ENCODE measurements at regions of chr20 and their contacts with region 1.

Region 1: GRCh38 chr20:23050847-23051631 is 1.6 kb upstream of the THBD start:
- DNase-seq: peak; percentile 94
- H3K4me3 ChIP-seq: peak overlapping the region; percentile 15 to 62 (median 50)
- H3K27ac ChIP-seq: peak overlapping the region; percentile 62
- H3K4me1 ChIP-seq: peaks cover 16% of the 10 kb centered on the region
- H3K27me3 ChIP-seq: no peaks in the 10 kb centered on the region
- CTCF ChIP-seq: peak; percentile 82 to 85
- POLR2A ChIP-seq: peak; percentile 44

Region 2: GRCh38 chr20:22333885-22334545 is 717.0 kb before region 1 on chr20:
- CTCF ChIA-PET with region 1: interaction called, 5 read pairs
- POLR2A ChIA-PET with region 1: no interaction called
- dilution Hi-C with region 1: no loop called
- intact Hi-C with region 1: loop called (anchors 2 kb)
- DNase-seq: peak; percentile 62
- H3K4me3 ChIP-seq: no peak overlapping the region
- H3K27ac ChIP-seq: no peak overlapping the region
- H3K4me1 ChIP-seq: no peaks in the 10 kb centered on the region
- H3K27me3 ChIP-seq: peaks cover 0 to 5% of the 10 kb centered on the region in 2 experiments
- CTCF ChIP-seq: peak; percentile 63 to 79
- POLR2A ChIP-seq: no peak

Region 3: DNA sequence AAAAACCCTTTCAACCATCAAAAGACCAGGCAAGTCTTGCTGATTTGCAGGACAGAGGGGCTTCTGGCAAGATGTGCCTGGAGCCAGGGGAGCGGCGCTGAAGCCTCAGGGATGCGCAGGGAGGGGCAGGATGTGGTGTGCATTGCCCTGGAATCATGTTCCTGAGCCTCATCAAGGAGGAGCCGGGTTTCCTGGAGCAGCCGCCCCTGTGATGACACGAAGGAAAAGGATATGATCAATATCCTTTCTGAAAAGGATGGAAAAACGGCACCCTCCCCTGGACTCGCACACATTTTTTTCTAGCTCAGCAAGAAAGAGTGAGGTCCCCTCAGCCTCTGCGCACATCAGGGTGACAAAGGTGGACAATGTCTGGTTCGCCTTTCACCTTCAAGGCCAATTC is 189.0 kb before region 1 on chr20:
- CTCF ChIA-PET with region 1: interaction called, 9 read pairs
- POLR2A ChIA-PET with region 1: no interaction called
- dilution Hi-C with region 1: no loop called
- intact Hi-C with region 1: loop called (anchors 2 kb)
- DNase-seq: peak; percentile 74
- H3K4me3 ChIP-seq: no peak overlapping the region
- H3K27ac ChIP-seq: peak overlapping the region; percentile 78
- H3K4me1 ChIP-seq: peaks cover 33% of the 10 kb centered on the region
- H3K27me3 ChIP-seq: no peaks in the 10 kb centered on the region
- CTCF ChIP-seq: no peak
- POLR2A ChIP-seq: peak; percentile 47

Region 4: GRCh38 chr20:23143098-23143497 is 92.1 kb after region 1 on chr20:
- CTCF ChIA-PET with region 1: interaction called, 23 read pairs
- POLR2A ChIA-PET with region 1: no interaction called
- dilution Hi-C with region 1: no loop called
- intact Hi-C with region 1: no loop called
- DNase-seq: peak; percentile 94
- H3K4me3 ChIP-seq: no peak overlapping the region
- H3K27ac ChIP-seq: peak overlapping the region; percentile 88
- H3K4me1 ChIP-seq: peaks cover 77% of the 10 kb centered on the region
- H3K27me3 ChIP-seq: no peaks in the 10 kb centered on the region
- CTCF ChIP-seq: no peak
- POLR2A ChIP-seq: no peak

Region 5: DNA sequence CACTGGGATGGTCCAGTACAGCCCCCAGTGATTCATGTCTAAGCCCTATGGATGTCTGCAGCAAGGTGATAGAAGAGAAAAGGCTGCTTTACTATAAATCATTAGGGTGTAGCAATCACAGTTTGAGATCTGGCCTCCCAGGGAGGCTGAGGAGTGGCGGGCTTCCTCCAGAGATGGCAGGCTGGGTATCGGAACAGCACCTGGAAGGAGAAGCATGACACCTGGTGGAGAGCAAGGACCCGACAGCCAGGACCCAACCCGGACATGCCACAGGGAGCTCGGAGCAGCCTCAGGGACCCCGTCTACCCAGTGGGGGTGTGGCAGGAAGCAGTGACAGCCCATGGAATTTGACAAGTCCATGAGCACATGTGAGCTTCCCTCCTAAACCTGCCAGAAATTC is 149.9 kb after region 1 on chr20:
- CTCF ChIA-PET with region 1: interaction called, 102 read pairs
- POLR2A ChIA-PET with region 1: no interaction called
- dilution Hi-C with region 1: no loop called
- intact Hi-C with region 1: loop called (anchors 1 kb)
- DNase-seq: no peak
- H3K4me3 ChIP-seq: no peak overlapping the region
- H3K27ac ChIP-seq: no peak overlapping the region
- H3K4me1 ChIP-seq: no peaks in the 10 kb centered on the region
- H3K27me3 ChIP-seq: no peaks in the 10 kb centered on the region
- CTCF ChIP-seq: peak; percentile 42 to 54
- POLR2A ChIP-seq: no peak

Region 6: GRCh38 chr20:23298926-23299672 is 248.1 kb after region 1 on chr20:
- CTCF ChIA-PET with region 1: interaction called, 10 read pairs
- POLR2A ChIA-PET with region 1: no interaction called
- dilution Hi-C with region 1: no loop called
- intact Hi-C with region 1: no loop called
- DNase-seq: no peak
- H3K4me3 ChIP-seq: no peak overlapping the region
- H3K27ac ChIP-seq: no peak overlapping the region
- H3K4me1 ChIP-seq: no peaks in the 10 kb centered on the region
- H3K27me3 ChIP-seq: peaks cover 0 to 1% of the 10 kb centered on the region in 2 experiments
- CTCF ChIP-seq: no peak
- POLR2A ChIP-seq: no peak

Region 7: GRCh38 chr20:23606652-23607049 is 555.6 kb after region 1 on chr20:
- CTCF ChIA-PET with region 1: no interaction called
- POLR2A ChIA-PET with region 1: no interaction called
- dilution Hi-C with region 1: no loop called
- intact Hi-C with region 1: loop called (anchors 10 kb)
- DNase-seq: peak; percentile 67
- H3K4me3 ChIP-seq: no peak overlapping the region
- H3K27ac ChIP-seq: no peak overlapping the region
- H3K4me1 ChIP-seq: no peaks in the 10 kb centered on the region
- H3K27me3 ChIP-seq: peaks cover 8% of the 10 kb centered on the region in 2 experiments
- CTCF ChIP-seq: peak; percentile 86 to 90
- POLR2A ChIP-seq: no peak